HEK293T (cell line): ENCODE measurements at regions of chr17 and their contacts with region 1.

Region 1: DNA sequence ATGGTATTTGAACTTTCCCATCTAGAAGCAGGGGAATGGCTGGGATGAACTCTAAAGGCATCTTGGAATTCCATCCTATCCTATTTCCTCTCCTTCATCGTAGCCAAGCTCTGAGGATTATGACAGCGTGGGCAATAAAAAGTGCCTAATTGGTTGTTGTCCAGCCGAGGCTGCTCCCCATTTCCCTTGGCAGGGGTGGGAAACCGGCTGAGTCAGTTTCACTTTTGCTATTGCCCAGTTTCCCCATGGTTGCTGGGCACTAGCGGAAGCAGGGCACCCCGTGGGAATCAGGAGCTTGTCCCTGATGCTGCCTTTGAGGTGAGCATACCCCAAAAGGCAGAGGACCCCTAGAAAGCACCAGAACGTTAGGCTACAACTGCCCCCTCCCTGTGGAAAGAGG is 13.8 kb upstream of the SP2 start:
- DNase-seq: no peak

Region 2: DNA sequence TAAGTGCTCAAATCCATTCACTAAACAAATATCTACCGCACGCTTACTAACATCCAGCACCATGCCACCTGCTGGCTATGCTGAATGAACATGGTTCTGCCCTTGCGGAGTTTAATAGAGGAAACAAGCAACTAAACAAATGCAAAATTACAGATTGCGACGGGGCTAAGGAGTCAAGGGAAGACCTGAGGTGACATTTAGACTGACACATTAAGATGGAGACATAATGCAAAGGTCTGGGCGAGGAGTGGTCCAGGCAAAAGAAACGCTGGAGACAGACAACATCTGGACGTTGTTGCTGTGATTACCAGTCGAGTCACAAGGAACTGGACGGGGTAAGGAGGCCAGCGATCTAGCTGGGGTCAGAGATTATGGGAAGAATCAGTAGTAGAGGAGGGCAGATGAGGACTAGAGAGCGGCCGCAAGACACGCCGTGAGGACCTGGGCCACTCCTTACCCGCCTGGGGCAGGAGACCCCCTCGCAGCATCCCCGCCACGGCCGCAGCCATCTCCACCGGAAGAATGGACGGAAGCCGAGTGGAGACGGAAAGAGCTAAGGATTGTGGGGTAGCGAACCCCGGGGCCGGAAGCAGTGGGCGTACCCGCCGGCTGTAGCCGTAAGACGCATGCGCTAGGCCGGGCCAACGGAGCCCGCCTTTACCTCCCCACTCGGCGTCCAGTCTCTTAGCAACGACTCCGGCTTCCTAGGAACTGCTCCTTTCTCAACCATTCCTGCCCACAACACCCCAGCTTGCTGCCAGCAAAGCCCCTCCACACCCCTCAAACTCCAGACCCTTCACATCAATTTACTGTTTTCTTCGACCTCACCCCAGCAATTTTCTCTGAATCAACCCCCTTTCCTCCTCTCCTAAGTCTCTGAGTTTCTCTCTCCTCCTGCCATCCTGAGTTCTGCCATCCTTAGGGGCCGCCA is 51.0 kb before region 1 on chr17 and contains the starts of genes LRRC46 and MRPL10:
- CTCF ChIA-PET with region 1: no interaction called
- POLR2A ChIA-PET with region 1: interaction called, 16 read pairs
- DNase-seq: peak; percentile 99